ENCODE measurements at regions of chr11 and their contacts with region 1.

Region 1: DNA sequence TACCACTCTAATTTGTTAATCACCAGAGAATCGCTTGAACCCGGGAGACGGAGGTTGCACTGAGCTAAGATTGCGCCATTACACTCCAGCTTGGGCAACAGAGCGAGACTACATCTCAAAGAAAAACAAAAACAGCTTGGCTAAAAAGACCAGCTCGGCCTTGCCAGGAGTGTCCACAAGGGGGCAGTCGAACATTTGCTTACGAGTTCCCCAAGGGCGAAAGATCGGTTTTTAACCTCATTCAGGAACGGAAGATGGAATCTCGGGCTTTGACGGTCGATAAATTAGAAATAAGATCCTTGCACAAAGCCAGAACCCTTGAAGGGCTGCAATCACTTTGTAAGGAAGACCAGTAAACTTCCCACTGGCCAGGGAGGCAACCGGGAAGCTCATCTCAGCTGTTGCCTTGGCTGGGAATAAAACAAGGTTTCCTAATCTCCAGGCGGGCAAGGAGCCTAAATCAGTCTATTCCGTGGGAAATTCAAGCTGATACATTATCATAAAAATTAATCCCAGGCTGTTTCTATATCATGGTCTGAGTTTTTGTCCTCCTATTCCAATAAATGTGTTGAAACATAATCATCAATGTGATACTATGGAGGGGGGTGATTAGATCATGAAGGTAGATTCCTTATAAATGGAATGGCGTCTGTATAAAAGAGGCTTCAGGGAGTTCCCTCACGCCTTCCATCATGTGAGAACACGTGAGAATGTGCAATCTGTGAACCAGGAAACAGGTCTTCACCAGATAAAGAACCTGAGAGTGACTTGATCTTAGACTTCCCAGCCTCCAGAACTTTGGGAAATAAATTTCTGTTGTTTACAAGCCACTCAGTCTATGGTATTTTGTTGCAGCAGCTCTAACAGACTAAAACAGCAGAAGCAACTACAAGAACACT is 14.9 kb upstream of the SLC29A2 start:
- DNase-seq: no peak
- H3K4me3 ChIP-seq: peak overlapping the region; percentile 35
- CTCF ChIP-seq: peak; percentile 87

Region 2: DNA sequence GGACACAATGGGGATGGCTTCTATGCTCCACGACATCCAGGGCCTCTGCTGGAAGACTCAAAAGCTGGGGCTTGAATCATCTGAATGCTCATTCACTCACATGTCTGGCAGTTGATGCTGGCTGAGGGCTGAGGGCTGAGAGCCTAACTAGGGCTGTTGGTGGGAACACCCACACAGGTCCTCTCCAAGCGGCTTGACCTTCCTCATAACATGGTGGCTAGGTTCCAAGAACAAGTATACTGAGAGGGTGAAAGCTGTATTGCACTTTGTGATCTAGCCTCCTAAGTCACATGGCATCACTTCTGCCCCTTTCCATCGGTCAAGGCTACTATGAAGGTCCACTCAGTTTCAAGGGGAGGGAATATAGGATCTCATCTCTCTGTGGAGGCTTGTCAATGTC is 87.2 kb before region 1 on chr11:
- CTCF ChIA-PET with region 1: interaction called, 14 read pairs
- POLR2A ChIA-PET with region 1: no interaction called
- DNase-seq: no peak
- H3K4me3 ChIP-seq: no peak overlapping the region
- CTCF ChIP-seq: no peak

Region 3: GRCh38 chr11:66336234-66337102 is 50.0 kb before region 1 on chr11 and contains the start of gene RIN1:
- CTCF ChIA-PET with region 1: interaction called, 15 read pairs
- POLR2A ChIA-PET with region 1: no interaction called
- DNase-seq: peak; percentile 71
- H3K4me3 ChIP-seq: peak within 1 kb of the TSS; percentile 80
- CTCF ChIP-seq: peak; percentile 29

Region 4: GRCh38 chr11:66363805-66364535 is 22.4 kb before region 1 on chr11:
- CTCF ChIA-PET with region 1: interaction called, 197 read pairs
- POLR2A ChIA-PET with region 1: no interaction called
- DNase-seq: no peak
- H3K4me3 ChIP-seq: no peak overlapping the region
- CTCF ChIP-seq: peak; percentile 67

Region 5: GRCh38 chr11:66408488-66409214 is 22.2 kb after region 1 on chr11:
- CTCF ChIA-PET with region 1: interaction called, 1,169 read pairs
- POLR2A ChIA-PET with region 1: no interaction called
- DNase-seq: peak; percentile 61
- H3K4me3 ChIP-seq: peak overlapping the region; percentile 59
- CTCF ChIP-seq: peak; percentile 100

Region 6: GRCh38 chr11:66429983-66430602 is 43.7 kb after region 1 on chr11:
- CTCF ChIA-PET with region 1: interaction called, 1,169 read pairs
- POLR2A ChIA-PET with region 1: no interaction called
- DNase-seq: no peak
- H3K4me3 ChIP-seq: no peak overlapping the region
- CTCF ChIP-seq: peak; percentile 90

Region 7: GRCh38 chr11:66454249-66454648 is 67.8 kb after region 1 on chr11:
- CTCF ChIA-PET with region 1: interaction called, 12 read pairs
- POLR2A ChIA-PET with region 1: no interaction called
- DNase-seq: no peak
- H3K4me3 ChIP-seq: no peak overlapping the region
- CTCF ChIP-seq: no peak